Naive thymus-derived CD4-positive, alpha-beta T cell (primary cell): ENCODE measurements at regions of chr14 and their contacts with region 1.

Region 1: DNA sequence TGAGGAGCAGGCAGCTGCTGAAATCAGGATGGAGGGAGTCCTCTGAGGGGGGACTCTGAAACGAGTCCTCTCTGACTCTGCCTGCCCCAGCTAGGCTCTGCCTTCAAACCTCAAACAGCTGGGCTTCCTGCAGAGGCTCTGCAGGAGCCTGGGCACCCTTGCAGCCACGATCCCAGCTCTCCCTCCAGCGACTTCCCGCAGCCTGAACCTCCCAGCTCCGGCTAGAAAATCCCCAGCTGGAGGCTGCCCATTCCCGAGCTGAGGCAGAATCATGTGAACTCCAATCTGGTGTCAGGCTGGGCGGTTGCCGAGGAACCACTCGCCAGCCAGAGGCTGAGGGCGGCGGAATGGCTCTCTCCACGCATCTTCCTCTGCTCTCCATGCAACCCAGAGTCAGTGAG is at the start of gene GPR68:
- DNase-seq: peak in 2 of 9 donors; percentile 25 to 39
- ATAC-seq: no peak
- H3K4me3 ChIP-seq: peak within 1 kb of the TSS; percentile 59
- H3K4me3 Mint-ChIP-seq: peak within 1 kb of the TSS; percentile 72 to 91 (median 82)
- H3K27ac ChIP-seq: peak within 1 kb of the TSS; percentile 89
- H3K27ac Mint-ChIP-seq: peak within 1 kb of the TSS; percentile 79 to 100 (median 98)
- H3K4me1 ChIP-seq: peaks cover 51 to 63% of the 10 kb centered on the region in 2 donors
- H3K4me1 Mint-ChIP-seq: peaks cover 56 to 96% (median 89%) of the 10 kb centered on the region in 7 donors
- H3K27me3 ChIP-seq: no peaks in the 10 kb centered on the region
- H3K27me3 Mint-ChIP-seq: no peaks in the 10 kb centered on the region
- total RNA-seq, gene GPR68: 0.86 to 38.6 (median 2.3) TPM

Region 2: GRCh38 chr14:91021991-91022621 is 222.4 kb before region 1 on chr14:
- CTCF ChIA-PET with region 1: no interaction called
- POLR2A ChIA-PET with region 1: no interaction called
- intact Hi-C with region 1: loop called in 1 of 2 experiments (anchors 5 kb)
- DNase-seq: peak in 2 of 9 donors; percentile 13 to 49
- ATAC-seq: peak; percentile 48
- H3K4me3 ChIP-seq: peak overlapping the region; percentile 56
- H3K4me3 Mint-ChIP-seq: peak overlapping the region; percentile 73 to 92 (median 84)
- H3K27ac ChIP-seq: peak overlapping the region; percentile 73
- H3K27ac Mint-ChIP-seq: peak overlapping the region; percentile 88 to 99 (median 92)
- H3K4me1 ChIP-seq: peaks cover 7 to 12% of the 10 kb centered on the region in 2 donors
- H3K4me1 Mint-ChIP-seq: peaks cover 21 to 79% (median 74%) of the 10 kb centered on the region in 7 donors
- H3K27me3 ChIP-seq: no peaks in the 10 kb centered on the region
- H3K27me3 Mint-ChIP-seq: no peaks in the 10 kb centered on the region

Region 3: DNA sequence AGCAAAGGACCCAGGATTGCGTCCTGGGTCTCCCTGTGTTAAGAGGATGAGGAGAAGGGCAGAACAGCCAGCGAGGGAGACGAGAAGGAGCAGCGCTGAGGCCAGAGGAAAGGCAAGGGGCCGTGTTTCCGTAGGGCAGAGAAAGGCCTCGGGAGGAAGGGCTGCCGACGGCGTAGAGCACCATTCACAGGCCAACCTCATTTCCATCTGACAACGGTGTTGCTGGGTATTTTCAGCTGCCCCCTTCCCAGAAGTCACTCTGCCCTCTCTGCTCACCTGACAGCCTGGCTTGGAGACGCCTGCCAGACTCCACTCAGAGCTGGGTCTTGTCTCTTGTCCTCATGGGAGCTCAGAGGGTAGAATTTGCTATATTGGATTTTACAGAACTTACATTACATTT is 51.4 kb before region 1 on chr14:
- CTCF ChIA-PET with region 1: interaction called, 3 read pairs
- POLR2A ChIA-PET with region 1: interaction called, 6 read pairs
- intact Hi-C with region 1: loop called (anchors 1 to 5 kb)
- DNase-seq: no peak
- ATAC-seq: no peak
- H3K4me3 ChIP-seq: no peak overlapping the region
- H3K4me3 Mint-ChIP-seq: peak overlapping the region in 2 of 10 donors; percentile 12 to 23
- H3K27ac ChIP-seq: no peak overlapping the region
- H3K27ac Mint-ChIP-seq: peak overlapping the region in 1 of 9 donors; percentile 13
- H3K4me1 ChIP-seq: peaks cover 8 to 9% of the 10 kb centered on the region in 2 donors
- H3K4me1 Mint-ChIP-seq: peaks cover 12 to 51% (median 22%) of the 10 kb centered on the region in 7 donors
- H3K27me3 ChIP-seq: no peaks in the 10 kb centered on the region
- H3K27me3 Mint-ChIP-seq: no peaks in the 10 kb centered on the region

Region 4: GRCh38 chr14:91257328-91258010 is 13.0 kb after region 1 on chr14:
- CTCF ChIA-PET with region 1: interaction called, 7 read pairs
- POLR2A ChIA-PET with region 1: interaction called, 26 read pairs
- intact Hi-C with region 1: loop called (anchors 1 to 2 kb)
- DNase-seq: peak in 1 of 9 donors; percentile 23
- ATAC-seq: no peak
- H3K4me3 ChIP-seq: no peak overlapping the region
- H3K4me3 Mint-ChIP-seq: peak overlapping the region in 2 of 10 donors; percentile 45 to 50
- H3K27ac ChIP-seq: no peak overlapping the region
- H3K27ac Mint-ChIP-seq: peak overlapping the region in 6 of 9 donors; percentile 28 to 87 (median 71)
- H3K4me1 ChIP-seq: peaks cover 26 to 32% of the 10 kb centered on the region in 2 donors
- H3K4me1 Mint-ChIP-seq: peaks cover 22 to 77% (median 51%) of the 10 kb centered on the region in 7 donors
- H3K27me3 ChIP-seq: no peaks in the 10 kb centered on the region
- H3K27me3 Mint-ChIP-seq: no peaks in the 10 kb centered on the region

Region 5: DNA sequence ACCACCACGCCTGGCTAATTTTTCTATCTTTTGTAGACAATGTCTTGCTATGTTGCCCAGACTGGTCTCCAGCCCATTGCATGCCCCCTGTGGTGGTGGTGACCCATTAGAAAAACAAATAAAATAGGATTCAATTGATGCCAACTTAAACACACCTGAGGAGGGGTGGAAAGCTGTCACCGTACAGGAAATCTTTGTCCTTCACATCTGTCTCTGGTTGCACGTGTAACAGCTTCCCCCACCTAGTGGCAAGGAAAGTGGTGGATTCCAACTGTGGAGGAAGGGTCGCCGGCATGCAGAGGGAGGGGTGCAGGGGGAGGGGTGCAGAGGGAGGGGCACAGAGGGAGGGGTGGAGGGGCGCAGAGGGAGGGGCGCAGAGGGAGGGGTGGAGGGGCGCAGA is 26.1 kb after region 1 on chr14:
- CTCF ChIA-PET with region 1: no interaction called
- POLR2A ChIA-PET with region 1: interaction called, 11 read pairs
- intact Hi-C with region 1: loop called in 1 of 2 experiments (anchors 2 kb)
- DNase-seq: no peak
- ATAC-seq: no peak
- H3K4me3 ChIP-seq: no peak overlapping the region
- H3K4me3 Mint-ChIP-seq: no peak overlapping the region
- H3K27ac ChIP-seq: no peak overlapping the region
- H3K27ac Mint-ChIP-seq: peak overlapping the region in 3 of 9 donors; percentile 45 to 80 (median 69)
- H3K4me1 ChIP-seq: no peaks in the 10 kb centered on the region
- H3K4me1 Mint-ChIP-seq: peaks cover 14 to 30% (median 27%) of the 10 kb centered on the region in 7 donors
- H3K27me3 ChIP-seq: no peaks in the 10 kb centered on the region
- H3K27me3 Mint-ChIP-seq: peaks cover 0 to 1% (median 0%) of the 10 kb centered on the region in 5 donors

Region 6: GRCh38 chr14:91317381-91318308 is 73.1 kb after region 1 on chr14:
- CTCF ChIA-PET with region 1: no interaction called
- POLR2A ChIA-PET with region 1: interaction called, 4 read pairs
- intact Hi-C with region 1: loop called in 1 of 2 experiments (anchors 2 kb)
- DNase-seq: peak; percentile 58 to 86 (median 84)
- ATAC-seq: peak; percentile 60
- H3K4me3 ChIP-seq: peak overlapping the region; percentile 39
- H3K4me3 Mint-ChIP-seq: peak overlapping the region; percentile 73 to 88 (median 81)
- H3K27ac ChIP-seq: peak overlapping the region; percentile 82
- H3K27ac Mint-ChIP-seq: peak overlapping the region; percentile 93 to 99 (median 98)
- H3K4me1 ChIP-seq: peaks cover 58 to 61% of the 10 kb centered on the region in 2 donors
- H3K4me1 Mint-ChIP-seq: peaks cover 55 to 88% (median 70%) of the 10 kb centered on the region in 7 donors
- H3K27me3 ChIP-seq: no peaks in the 10 kb centered on the region
- H3K27me3 Mint-ChIP-seq: no peaks in the 10 kb centered on the region

Region 7: DNA sequence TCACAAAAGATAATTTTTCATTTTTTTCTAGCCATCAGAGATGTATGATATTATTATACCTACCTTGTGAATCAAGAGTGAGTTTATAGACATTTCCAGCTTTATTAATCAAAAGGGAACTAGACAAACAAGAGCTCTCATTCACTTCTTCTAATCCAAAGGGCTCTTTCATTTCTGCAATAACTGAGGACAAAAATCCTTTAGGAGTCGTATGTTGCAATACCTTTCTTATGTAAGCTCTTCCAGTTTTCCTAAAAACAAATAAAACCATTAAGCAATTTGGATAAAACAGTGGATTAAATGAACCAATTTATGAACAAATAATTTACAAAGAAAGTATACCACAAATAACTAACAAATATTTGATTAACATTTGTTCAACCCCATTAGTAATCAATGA is 380.3 kb after region 1 on chr14:
- CTCF ChIA-PET with region 1: no interaction called
- POLR2A ChIA-PET with region 1: no interaction called
- intact Hi-C with region 1: no loop called
- DNase-seq: no peak
- ATAC-seq: no peak
- H3K4me3 ChIP-seq: no peak overlapping the region
- H3K4me3 Mint-ChIP-seq: no peak overlapping the region
- H3K27ac ChIP-seq: no peak overlapping the region
- H3K27ac Mint-ChIP-seq: no peak overlapping the region
- H3K4me1 ChIP-seq: no peaks in the 10 kb centered on the region
- H3K4me1 Mint-ChIP-seq: no peaks in the 10 kb centered on the region
- H3K27me3 ChIP-seq: no peaks in the 10 kb centered on the region
- H3K27me3 Mint-ChIP-seq: peaks cover 0 to 12% (median 4%) of the 10 kb centered on the region in 5 donors